RWPE1 (cell line): ENCODE measurements at regions of chr19 and their contacts with region 1.

Region 1: DNA sequence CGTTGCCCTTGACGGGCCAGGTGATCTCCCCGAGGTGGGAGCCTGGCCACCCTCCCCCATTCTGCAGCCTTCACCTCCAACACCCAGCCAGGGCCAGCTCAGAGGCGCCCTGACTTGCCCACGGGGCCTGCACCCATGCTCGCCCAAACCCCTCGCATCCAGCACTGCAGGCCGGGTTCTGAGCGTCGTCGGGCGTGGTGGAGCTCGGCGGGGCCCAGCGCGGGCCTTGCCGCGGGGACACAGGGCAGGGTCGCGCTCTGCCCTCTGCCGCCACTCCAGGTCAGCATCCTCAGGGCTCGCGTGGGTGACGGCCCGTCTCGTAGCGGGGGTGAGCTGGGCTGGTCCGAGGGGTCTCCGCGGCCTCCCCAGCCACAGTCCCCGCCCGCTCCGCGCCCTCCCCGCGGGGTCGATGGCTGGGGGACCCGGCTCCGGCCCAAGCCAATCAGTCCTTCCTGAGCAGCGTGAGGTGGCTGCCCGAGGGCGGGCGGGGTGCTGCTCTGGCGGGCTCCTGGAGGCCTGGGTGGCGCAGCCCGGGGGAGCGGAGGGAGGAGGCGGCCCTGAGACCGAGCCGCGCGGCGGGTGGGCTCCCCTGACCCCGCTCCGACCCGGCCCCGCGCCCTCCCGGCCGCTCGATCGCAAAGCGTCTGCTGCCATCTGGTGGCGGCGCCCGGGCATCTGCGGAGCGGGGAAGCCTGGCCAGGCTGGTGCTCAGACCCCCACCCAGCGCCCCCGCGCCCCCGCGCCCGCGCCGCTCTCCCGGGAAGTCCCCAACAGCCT is 61.4 kb downstream of the CCNE1 start:
- DNase-seq: peak; percentile 56
- H3K27ac ChIP-seq: no peak overlapping the region
- CTCF ChIP-seq: peak; percentile 89

Region 2: DNA sequence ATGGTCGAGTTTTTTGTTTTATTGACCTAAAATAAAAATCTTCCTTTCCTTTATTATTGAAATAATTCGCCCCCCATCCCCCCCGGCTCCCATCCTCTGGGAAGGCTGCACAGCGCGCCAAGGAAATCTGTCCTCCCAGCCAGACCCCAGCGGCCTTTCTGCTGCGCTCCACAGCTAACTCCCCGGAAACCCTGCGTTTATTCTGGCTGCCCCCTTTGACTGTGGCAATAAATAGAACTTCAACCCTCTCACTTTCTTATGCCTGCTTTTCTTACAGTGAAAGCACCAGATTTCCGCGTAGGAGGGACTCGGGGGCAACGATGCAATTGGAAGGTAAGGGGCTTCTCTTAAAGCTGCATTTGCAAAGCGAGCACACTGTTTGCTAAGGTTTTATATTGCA is 148.5 kb before region 1 on chr19:
- CTCF ChIA-PET with region 1: interaction called, 11 read pairs
- POLR2A ChIA-PET with region 1: no interaction called
- DNase-seq: no peak
- H3K27ac ChIP-seq: no peak overlapping the region
- CTCF ChIP-seq: no peak

Region 3: DNA sequence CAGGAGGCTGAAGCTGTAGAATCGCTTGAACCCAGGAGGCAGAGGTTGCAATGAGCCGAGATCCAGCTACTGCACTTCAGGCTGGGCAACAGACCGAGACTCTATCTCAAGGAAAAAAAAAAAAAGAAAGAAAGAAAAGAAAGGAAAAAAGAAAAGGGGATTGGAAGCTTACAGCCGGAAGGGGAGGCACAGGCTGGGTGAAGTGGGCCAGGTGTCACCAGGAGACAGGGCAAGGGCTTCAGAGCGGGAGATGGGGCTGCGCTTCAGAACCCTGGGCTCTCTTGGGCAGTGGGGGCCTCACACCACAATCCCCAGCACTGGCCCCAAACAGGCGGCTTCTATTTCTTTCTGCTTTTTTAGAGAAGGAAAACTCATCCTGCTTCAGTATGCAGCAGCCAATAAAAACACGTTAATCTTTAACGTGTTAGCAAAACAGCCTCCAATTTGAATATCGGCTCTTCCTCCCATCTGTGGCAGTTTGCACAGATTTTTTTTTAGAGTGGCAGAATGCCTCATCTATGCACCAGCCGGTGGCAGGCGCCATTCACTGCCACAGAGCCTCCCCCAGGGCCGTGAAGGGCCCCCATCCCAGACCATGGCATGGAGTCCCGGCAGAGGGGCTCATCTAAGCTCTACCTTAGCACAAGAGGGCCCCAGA is 111.5 kb before region 1 on chr19:
- CTCF ChIA-PET with region 1: interaction called, 43 read pairs
- POLR2A ChIA-PET with region 1: interaction called, 5 read pairs
- DNase-seq: no peak
- H3K27ac ChIP-seq: no peak overlapping the region
- CTCF ChIP-seq: no peak

Region 4: DNA sequence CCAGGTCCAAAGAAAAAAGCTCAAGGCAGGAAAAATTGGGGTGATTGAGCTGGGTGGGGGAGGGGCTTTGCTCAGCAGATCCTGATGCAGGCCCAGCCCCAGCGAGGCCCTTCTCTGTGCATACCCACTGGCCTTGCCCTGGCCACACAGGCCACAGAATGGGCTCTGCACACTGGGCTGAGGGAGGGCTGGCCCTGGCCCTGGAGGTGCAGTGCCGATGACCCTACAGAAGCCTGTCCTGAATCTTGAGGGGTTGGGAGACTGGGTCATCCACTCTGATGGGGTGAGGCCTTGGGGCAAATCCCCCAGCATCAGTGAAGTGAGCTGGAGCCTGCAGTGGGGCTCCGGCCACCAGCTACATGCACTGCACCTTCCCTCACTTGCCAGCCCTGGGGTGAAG is 221.9 kb after region 1 on chr19:
- CTCF ChIA-PET with region 1: no interaction called
- POLR2A ChIA-PET with region 1: no interaction called
- DNase-seq: no peak
- H3K27ac ChIP-seq: no peak overlapping the region
- CTCF ChIP-seq: no peak